ENCODE measurements at regions of chr2 and their contacts with region 1.

Region 1: DNA sequence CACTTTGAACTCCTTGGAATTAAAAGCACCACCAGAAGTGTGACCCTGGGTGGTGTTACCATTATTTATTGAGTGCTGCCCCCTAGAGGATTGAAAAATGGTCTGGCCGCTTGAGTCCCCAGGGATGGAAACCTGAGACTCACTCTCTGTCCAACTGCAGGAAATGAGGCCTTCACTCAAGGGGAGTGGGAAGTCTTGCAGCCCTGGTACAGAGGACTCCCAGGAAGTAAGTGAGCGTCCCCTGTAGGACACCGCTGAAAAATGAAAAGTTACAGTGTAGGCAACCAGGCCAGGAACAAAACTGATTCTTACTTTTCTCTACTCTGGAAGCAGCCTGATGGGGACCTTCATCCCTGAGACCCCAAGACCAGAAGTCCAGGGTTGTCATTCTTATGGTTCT is 2.2 kb upstream of the NRP2 start:
- DNase-seq: peak; percentile 41
- H3K4me3 Mint-ChIP-seq: peak overlapping the region; percentile 28
- H3K27ac Mint-ChIP-seq: no peak overlapping the region
- H3K4me1 Mint-ChIP-seq: peaks cover 47% of the 10 kb centered on the region
- H3K27me3 Mint-ChIP-seq: peaks cover 26% of the 10 kb centered on the region

Region 2: DNA sequence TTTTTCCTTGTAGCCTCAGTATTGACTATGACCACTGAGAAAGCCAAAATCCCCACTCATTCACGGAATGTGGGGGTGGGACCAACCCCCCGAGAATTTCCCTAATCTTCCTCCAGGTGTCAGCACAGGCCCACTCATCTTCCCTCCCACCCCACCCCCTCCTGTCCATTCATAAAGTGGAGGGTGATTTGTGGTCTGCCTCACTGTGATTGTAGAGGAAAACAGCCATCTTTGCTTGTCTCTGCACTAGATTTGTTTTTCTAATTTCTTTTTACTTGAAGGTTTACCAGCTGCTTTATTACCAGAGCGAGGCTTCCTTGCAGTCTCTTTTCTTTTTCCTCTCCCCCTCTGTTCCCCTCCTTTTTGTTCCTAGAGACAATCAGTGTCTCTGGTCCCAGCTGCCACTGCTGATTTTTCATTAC is 1571.7 kb before region 1 on chr2:
- intact Hi-C with region 1: loop called (anchors 10 kb)
- DNase-seq: peak; percentile 20
- H3K4me3 Mint-ChIP-seq: peak overlapping the region; percentile 64
- H3K27ac Mint-ChIP-seq: peak overlapping the region; percentile 89
- H3K4me1 Mint-ChIP-seq: peaks cover 75% of the 10 kb centered on the region
- H3K27me3 Mint-ChIP-seq: no peaks in the 10 kb centered on the region

Region 3: GRCh38 chr2:204892506-204893255 is 787.4 kb before region 1 on chr2:
- intact Hi-C with region 1: loop called (anchors 5 kb)
- DNase-seq: peak; percentile 17
- H3K4me3 Mint-ChIP-seq: no peak overlapping the region
- H3K27ac Mint-ChIP-seq: no peak overlapping the region
- H3K4me1 Mint-ChIP-seq: peaks cover 14% of the 10 kb centered on the region
- H3K27me3 Mint-ChIP-seq: no peaks in the 10 kb centered on the region

Region 4: DNA sequence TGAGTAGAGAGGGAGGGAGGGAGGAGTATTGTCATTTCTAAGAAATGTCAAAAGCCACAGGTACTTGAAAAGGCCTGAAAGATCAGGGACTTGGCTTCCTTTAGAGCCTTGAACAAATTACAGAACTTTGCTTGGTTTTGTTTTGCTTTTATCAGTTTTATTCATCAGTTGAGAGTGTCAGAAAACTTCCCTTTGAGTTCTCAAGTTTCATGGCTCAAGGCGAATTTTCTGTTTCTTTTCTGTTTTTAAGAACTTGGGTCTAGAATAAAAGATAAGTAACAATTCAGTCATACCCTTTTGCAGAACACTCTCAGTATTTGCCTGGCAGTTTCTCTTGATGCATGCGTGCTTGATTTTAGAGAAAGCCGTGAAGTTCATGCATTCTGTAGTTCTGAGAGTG is 602.9 kb before region 1 on chr2:
- intact Hi-C with region 1: loop called (anchors 10 kb)
- DNase-seq: peak; percentile 20
- H3K4me3 Mint-ChIP-seq: peak overlapping the region; percentile 39
- H3K27ac Mint-ChIP-seq: peak overlapping the region; percentile 60
- H3K4me1 Mint-ChIP-seq: peaks cover 43% of the 10 kb centered on the region
- H3K27me3 Mint-ChIP-seq: no peaks in the 10 kb centered on the region

Region 5: DNA sequence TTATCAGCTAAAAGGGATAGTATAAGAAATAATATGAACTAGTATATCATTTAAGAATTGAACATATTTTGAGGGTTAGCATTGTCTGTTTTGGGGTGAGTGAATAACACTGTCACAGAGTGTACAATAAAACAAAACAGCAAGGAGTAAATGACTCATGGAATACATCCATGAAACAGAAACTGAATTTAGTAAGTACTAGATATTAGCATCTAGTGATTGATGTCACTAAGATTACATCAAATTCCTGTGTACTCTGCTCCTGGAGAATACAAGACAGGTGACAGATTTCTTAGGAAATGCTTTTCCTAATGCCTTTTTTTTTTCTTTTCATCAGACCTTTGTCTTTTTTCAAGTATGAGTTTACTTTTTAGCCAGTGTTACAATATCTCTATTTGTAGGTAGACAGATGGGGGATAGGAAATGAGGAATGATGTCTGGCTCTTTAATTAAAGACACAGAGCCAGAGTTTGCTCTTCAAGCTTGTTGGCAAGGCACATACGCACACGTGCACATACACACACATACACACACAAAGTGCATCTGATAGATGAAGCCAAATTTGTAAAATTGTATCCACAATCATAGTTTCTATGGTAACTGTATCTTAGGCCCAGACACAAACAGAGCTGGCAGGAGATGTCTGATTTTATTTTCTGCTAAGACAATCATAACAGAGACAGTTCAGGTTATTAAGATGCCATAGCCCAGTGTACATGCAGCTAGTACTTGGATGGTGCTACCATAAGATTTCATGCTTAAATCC is 135.9 kb before region 1 on chr2:
- intact Hi-C with region 1: loop called (anchors 5 kb)
- DNase-seq: no peak
- H3K4me3 Mint-ChIP-seq: no peak overlapping the region
- H3K27ac Mint-ChIP-seq: peak overlapping the region; percentile 66
- H3K4me1 Mint-ChIP-seq: peaks cover 30% of the 10 kb centered on the region
- H3K27me3 Mint-ChIP-seq: peaks cover 4% of the 10 kb centered on the region

Region 6: GRCh38 chr2:205660521-205661124 is 19.4 kb before region 1 on chr2:
- intact Hi-C with region 1: loop called (anchors 2 kb)
- DNase-seq: peak; percentile 34
- H3K4me3 Mint-ChIP-seq: peak overlapping the region; percentile 27
- H3K27ac Mint-ChIP-seq: peak overlapping the region; percentile 63
- H3K4me1 Mint-ChIP-seq: peaks cover 54% of the 10 kb centered on the region
- H3K27me3 Mint-ChIP-seq: no peaks in the 10 kb centered on the region